Activated T-helper 1 cell treated with anti-CD3 and anti-CD28 coated beads, Interleukin-12 subunit alpha, Interleukin-12 subunit beta, Interleukin-2, Interleukin-4 antibody, amounts not matched to agents 30 ng/mL and 10 ng/mL and 1 ng/mL, durations not matched to agents 14 hours and 24 hours and 36 hours (primary cell): ENCODE measurements at regions of chr5 and their contacts with region 1.

Region 1: DNA sequence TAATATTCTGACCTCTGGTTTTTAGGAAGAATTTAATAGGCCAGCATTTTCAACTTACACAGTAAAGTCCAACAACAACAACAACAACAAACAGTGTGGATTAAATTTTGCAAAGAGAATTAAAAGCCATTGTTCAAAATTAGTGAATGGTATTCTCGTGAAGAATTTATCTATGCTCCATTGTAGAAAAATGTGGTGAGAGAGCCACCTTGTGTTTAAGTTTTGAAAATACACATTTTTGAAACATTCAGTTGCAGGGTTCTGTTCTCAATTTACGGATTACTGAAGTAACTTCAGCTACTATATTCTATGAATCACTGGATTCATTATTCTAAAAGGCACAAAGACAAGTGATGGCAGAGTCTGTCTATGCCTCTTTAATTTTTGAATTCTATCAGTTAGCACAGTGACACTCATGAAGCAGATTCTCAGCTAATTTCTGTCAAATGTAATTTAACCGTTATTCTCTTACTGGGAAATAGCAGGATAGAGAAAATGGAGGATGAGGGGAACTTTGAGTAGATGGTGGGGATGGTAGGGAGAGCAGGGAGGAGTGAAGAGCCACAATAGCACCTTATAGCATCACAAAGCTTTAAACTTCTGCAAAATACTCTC is 11.0 kb downstream of the CCDC152 start:
- DNase-seq: no peak
- H3K4me3 Mint-ChIP-seq: no peak overlapping the region
- H3K27ac Mint-ChIP-seq: no peak overlapping the region
- H3K4me1 Mint-ChIP-seq: no peaks in the 10 kb centered on the region
- H3K27me3 Mint-ChIP-seq: peaks cover 10% of the 10 kb centered on the region

Region 2: GRCh38 chr5:41748631-41749030 is 1019.0 kb before region 1 on chr5:
- intact Hi-C with region 1: no loop called
- DNase-seq: no peak
- H3K4me3 Mint-ChIP-seq: no peak overlapping the region
- H3K27ac Mint-ChIP-seq: peak overlapping the region; percentile 50
- H3K4me1 Mint-ChIP-seq: peaks cover 18% of the 10 kb centered on the region
- H3K27me3 Mint-ChIP-seq: no peaks in the 10 kb centered on the region

Region 3: DNA sequence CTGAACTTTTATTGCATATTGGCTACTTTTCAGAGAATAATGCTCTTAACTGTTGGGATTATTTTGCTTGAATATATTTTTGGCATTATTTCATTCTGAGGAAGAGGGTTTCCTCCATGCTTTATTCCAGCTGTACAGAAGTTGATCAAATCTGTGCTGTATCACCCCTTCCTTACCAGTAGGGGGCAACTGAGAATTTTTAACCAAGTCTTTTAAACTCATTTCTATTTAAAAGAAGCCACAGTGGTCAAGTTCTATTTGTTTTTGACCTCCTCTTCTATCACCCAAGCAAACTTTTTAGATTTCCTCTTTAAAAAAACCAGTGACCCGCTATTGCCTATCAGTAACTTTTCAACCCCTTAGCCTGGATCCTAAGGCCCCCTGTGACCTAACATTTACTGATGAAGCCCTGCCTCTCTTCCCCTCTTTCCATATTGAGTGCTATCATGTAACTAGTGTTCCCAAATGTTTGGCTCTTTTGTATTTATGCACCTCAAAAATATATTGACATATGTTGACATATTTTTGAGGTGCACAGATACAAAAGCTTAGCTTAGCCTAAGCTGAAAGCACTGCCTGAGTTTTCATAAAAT is 761.9 kb before region 1 on chr5:
- intact Hi-C with region 1: loop called (anchors 1 kb)
- DNase-seq: no peak
- H3K4me3 Mint-ChIP-seq: no peak overlapping the region
- H3K27ac Mint-ChIP-seq: no peak overlapping the region
- H3K4me1 Mint-ChIP-seq: no peaks in the 10 kb centered on the region
- H3K27me3 Mint-ChIP-seq: peaks cover 4% of the 10 kb centered on the region

Region 4: DNA sequence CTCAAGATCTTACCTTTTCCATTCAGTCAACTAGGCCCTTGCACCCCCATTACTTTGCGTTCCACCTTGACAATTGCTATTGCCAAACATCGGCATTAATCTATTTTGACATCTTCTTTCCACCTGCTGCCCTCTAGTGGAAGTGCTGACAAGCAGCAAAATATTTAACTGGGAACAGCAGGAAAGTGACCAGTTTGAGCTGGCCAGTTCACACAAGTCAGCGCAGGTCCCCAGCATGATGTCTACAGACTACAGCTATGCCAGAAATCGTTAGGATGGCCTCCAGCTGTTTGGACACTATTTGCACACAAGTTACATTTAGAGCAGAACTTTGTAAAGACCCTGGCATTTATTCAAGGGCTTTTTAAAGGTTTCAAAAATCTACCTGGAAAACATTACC is 184.3 kb before region 1 on chr5:
- intact Hi-C with region 1: loop called (anchors 5 kb)
- DNase-seq: peak; percentile 4
- H3K4me3 Mint-ChIP-seq: no peak overlapping the region
- H3K27ac Mint-ChIP-seq: no peak overlapping the region
- H3K4me1 Mint-ChIP-seq: no peaks in the 10 kb centered on the region
- H3K27me3 Mint-ChIP-seq: peaks cover 13% of the 10 kb centered on the region